Astrocyte of the cerebellum (primary cell): ENCODE measurements at regions of chr2 and their contacts with region 1.

Region 1: GRCh38 chr2:182186132-182186735 is 200.6 kb downstream of the PPP1R1C start:
- DNase-seq: peak; percentile 36
- H3K4me3 ChIP-seq: no peak overlapping the region
- CTCF ChIP-seq: peak; percentile 37

Region 2: DNA sequence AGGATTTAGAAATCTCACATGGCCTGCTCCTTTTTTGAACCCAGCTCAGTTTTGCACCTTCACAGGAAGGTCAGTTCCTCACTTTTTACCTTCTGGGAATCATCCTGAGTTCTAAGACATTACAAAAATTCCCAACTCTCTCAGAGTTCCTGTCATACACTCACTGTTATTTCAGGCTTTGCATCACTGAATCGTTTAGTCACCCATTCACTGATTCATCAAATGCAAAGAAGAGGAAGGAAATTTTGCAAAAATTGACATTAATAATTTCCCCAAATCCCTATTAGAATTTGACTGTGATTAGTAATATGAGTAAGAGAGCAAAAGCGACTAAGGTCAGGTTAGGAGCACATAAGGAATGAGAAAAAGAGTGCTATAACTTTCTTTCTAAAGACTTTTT is 43.1 kb after region 1 on chr2:
- in situ Hi-C with region 1: no loop called
- DNase-seq: no peak
- H3K4me3 ChIP-seq: no peak overlapping the region
- CTCF ChIP-seq: no peak

Region 3: GRCh38 chr2:182666674-182667314 is 480.6 kb after region 1 on chr2:
- in situ Hi-C with region 1: loop called (anchors 25 kb)
- DNase-seq: no peak
- H3K4me3 ChIP-seq: no peak overlapping the region
- CTCF ChIP-seq: peak; percentile 59